ENCODE measurements at regions of chr12 and their contacts with region 1.

Region 1: DNA sequence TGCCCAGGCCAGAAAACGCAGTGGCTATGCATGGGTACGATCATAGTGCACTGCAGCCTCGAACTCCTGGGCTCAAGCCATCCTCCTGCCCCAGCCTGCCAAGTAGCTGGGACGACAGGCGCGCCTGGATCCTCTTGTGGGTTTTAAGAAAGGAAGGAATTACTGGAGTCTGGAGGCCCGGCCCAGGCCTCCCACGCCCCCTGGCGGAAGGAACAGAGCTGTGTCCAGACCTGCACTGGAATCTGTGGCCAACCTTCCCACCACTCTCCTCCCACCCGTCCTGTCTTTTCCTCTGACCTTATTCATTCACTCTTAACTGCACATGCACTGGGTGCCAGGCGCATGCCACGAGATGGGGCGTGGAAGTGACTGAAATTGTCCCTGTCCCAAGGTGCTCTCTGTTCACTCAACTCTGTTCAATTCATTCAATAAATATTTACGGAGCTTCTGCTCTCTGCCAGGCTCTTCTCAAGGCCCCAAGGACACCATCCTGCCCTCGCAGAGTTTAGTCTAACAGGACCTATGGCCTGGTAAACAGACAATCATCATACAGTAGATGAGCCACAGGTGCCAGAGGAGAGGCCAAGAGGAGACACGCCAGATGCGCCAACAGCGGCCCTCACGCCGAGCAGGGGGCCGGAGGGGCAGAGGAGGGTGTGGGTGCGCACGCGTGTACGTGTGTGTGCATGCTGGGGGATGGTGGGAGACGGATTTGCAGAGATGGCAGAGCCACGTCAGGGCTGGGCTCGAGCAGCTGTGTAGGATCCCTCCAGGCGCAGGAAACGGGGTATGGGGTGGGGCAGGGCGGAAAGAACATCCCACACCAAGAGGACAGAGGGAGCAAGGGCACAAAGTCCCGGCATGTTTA is 13.7 kb upstream of the TMEM106C start:
- DNase-seq: no peak
- H3K4me3 ChIP-seq: no peak overlapping the region
- H3K27ac ChIP-seq: peak overlapping the region in 3 of 4 donors; percentile 21 to 54 (median 23)
- H3K4me1 ChIP-seq: peaks cover 10 to 46% (median 12%) of the 10 kb centered on the region in 3 donors
- H3K27me3 ChIP-seq: no peaks in the 10 kb centered on the region
- CTCF ChIP-seq: peak; percentile 58 to 90 (median 84)
- POLR2A ChIP-seq: no peak

Region 2: DNA sequence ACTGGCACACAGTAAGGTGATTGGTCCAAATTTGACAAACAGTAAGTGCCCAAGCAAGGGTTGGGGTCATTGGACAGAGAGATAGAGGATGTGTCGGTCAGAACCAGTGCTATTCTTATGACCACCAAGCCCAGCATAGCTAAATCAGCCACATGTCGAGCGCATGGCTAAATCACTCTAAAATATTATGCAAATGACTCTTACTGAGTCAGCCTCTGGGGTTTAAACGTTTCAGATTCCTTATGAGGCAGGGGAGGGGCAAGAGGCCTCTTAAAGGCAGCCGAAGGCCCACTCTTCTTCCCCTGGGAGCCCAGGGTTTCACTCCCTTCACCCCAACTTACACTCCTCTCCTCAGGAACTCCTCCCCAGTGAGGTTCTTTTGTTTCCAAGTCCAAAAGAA is 223.8 kb before region 1 on chr12:
- intact Hi-C with region 1: loop called (anchors 10 kb)
- DNase-seq: no peak
- H3K4me3 ChIP-seq: peak overlapping the region in 1 of 4 donors; percentile 38
- H3K27ac ChIP-seq: peak overlapping the region; percentile 65 to 81 (median 68)
- H3K4me1 ChIP-seq: peaks cover 6 to 94% (median 24%) of the 10 kb centered on the region in 3 donors
- H3K27me3 ChIP-seq: no peaks in the 10 kb centered on the region
- CTCF ChIP-seq: no peak
- POLR2A ChIP-seq: no peak

Region 3: GRCh38 chr12:47837190-47838171 is 112.2 kb before region 1 on chr12:
- intact Hi-C with region 1: no loop called
- DNase-seq: no peak
- H3K4me3 ChIP-seq: no peak overlapping the region
- H3K27ac ChIP-seq: no peak overlapping the region
- H3K4me1 ChIP-seq: peaks cover 0 to 38% (median 4%) of the 10 kb centered on the region in 3 donors
- H3K27me3 ChIP-seq: no peaks in the 10 kb centered on the region
- CTCF ChIP-seq: peak; percentile 91 to 98 (median 95)
- POLR2A ChIP-seq: no peak

Region 4: GRCh38 chr12:47868552-47869031 is 81.1 kb before region 1 on chr12:
- intact Hi-C with region 1: loop called (anchors 10 kb)
- DNase-seq: no peak
- H3K4me3 ChIP-seq: no peak overlapping the region
- H3K27ac ChIP-seq: peak overlapping the region in 1 of 4 donors; percentile 40
- H3K4me1 ChIP-seq: peaks cover 14 to 40% (median 24%) of the 10 kb centered on the region in 3 donors
- H3K27me3 ChIP-seq: no peaks in the 10 kb centered on the region
- CTCF ChIP-seq: no peak
- POLR2A ChIP-seq: no peak

Region 5: DNA sequence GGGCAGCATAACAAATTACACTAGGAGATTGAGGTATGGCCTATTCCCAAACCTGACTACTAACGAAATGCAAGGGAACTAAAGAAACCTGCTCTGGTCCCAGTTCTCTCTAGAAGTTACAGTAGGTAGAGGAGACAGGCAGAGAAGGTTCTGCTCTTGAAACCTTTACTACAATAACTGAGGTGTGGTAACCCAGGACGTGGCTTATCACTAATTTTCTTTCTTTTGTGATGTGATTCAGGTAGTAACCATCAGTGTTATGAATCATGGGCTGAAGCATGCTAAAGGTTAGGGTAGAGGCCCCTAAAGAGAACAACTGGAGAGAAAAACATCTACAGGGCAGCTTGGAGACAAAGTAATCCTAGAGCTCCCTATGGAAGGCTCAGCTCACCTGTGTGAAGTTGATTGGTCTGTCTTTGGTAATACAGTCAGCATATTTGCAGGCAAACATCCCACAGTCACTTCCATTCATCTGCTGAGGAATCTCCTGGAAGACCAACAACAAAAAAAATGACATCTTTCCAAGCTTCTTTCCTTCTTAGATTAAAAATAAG is 96.4 kb after region 1 on chr12:
- intact Hi-C with region 1: no loop called
- DNase-seq: no peak
- H3K4me3 ChIP-seq: no peak overlapping the region
- H3K27ac ChIP-seq: no peak overlapping the region
- H3K4me1 ChIP-seq: no peaks in the 10 kb centered on the region
- H3K27me3 ChIP-seq: no peaks in the 10 kb centered on the region
- CTCF ChIP-seq: no peak
- POLR2A ChIP-seq: no peak

Measured in esophagus squamous epithelium (tissue), 5 donors.